RWPE1 (cell line): ENCODE measurements at regions of chr4 and their contacts with region 1.

Region 1: DNA sequence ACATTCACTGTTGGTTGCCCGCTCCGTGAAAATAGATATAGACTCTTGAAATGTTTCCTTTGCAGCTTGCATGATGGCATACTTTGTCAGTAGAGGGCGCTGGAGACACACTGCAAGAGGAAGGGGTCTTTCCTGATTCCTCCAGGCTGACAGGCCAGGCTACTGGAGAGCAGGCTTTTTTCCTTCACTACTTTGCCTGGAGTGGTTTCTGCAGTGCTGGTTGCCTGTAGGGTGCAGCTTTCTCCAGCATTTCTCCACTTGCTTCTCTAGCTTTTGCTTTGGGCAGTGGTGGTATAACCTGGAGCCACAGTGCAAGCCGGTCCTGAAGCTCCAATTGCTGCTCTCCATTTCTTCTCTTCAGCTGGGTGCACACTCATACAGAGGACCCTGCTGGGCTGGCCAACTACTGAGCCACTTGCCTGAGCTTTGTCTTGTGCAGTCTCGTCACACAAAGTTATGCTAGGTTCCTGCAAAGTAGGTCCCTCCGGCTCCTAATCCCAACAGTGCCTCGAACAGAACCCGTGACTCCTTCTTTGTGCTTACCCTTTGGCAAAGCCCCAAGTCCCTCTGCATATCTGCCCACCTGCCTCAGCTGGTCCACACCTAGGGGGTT is 46.3 kb downstream of the RASSF6 start:
- DNase-seq: peak; percentile 34
- H3K27ac ChIP-seq: peak overlapping the region; percentile 41; the same call in 1 of the 2 replicates
- CTCF ChIP-seq: peak; percentile 88

Region 2: DNA sequence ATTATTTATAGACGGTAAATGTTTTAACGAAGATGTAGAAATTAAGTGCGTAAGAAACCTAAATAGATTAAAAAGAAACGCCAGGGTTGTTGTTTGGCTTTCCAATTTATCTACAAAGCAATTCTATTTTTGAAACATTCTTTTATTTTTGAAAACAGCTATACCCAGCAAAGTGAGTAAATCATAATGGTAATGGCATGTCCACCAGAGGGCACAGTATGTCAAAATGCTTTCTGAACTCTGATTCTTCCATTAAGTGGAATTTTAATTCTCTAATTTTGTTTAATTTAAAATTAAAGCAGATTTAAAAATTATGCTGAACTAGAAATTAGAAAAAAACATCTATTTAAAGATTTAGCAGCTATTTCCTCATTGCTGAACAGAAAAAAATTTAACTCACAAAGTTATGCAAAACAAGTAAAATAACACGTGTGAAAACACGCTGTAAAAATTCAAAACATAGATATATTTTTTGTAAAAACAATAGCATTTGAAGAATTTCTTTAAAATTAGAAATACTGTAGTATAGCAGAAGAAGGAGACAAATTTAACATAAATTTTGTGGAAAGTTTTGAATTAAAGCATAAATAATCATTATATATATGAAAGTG is 19.8 kb after region 1 on chr4:
- CTCF ChIA-PET with region 1: interaction called, 12 read pairs
- POLR2A ChIA-PET with region 1: no interaction called
- DNase-seq: no peak
- H3K27ac ChIP-seq: no peak overlapping the region
- CTCF ChIP-seq: peak; percentile 64

Region 3: GRCh38 chr4:73653695-73654106 is 79.8 kb after region 1 on chr4:
- CTCF ChIA-PET with region 1: interaction called, 27 read pairs
- POLR2A ChIA-PET with region 1: no interaction called
- DNase-seq: peak; percentile 53
- H3K27ac ChIP-seq: no peak overlapping the region
- CTCF ChIP-seq: peak; percentile 57; the same call in 1 of the 2 replicates